ENCODE measurements at regions of chr6 and their contacts with region 1.

Region 1: DNA sequence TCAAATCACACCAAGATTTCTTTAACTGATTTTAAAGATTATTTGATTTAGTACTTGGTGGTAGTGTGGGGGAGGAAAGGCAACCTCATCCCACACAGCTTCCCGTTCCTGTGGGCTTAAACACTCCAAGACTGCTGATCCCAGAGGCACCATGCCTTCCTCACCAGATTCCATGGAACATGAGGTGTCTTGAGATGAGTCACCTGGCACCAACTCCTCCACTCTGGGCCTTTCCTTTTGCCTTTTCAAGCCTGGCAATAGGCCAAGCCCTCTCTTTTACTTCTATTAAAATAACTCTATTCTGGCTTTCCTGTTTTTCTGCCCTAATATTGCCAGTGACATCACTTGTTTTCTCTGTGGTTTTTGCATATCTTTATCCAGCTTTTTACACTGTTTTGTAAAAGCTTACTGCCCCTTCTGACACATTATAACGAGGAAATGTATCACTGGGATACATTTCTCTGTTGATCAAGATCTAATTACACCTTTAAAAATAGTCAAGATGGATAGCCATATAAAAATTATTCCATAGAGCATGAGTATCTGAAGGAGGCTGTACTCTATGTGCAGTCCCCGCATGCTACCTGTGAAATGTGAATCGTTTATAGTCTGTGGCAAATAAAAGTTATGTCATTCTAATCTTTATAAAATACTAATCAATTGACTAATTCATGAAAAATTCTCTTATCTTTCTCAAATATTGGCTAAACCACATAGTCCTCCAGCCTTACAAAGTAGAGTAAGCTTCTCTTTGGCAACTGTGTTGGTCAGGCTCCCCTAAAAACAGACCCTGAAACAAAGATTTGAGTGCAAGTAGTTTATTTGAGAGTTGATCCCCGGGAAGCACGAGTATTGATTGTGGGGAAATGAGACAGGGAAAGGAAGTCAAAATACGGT is 257.8 kb upstream of the KCNQ5 start:
- DNase-seq: no peak
- CTCF ChIP-seq: no peak

Region 2: DNA sequence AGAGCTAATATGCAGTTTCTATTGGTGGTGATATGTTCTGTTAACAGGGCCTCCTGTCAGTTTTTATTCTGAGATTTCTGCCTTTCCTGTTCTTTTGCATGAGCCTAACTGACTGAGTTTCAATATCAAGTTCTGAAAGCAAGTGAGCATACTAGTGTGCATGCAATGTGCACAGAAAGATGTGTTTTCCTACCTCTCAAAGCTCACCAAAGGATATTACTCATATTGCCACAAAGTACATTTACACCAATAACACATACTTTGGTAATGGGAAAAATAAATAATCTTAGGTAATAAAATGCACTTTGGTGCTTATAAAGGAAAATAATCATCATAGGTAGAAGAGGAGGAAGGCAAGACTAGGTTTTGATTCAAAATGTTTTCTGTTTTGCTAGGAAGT is 666.2 kb after region 1 on chr6:
- CTCF ChIA-PET with region 1: no interaction called
- POLR2A ChIA-PET with region 1: interaction called, 10 read pairs
- DNase-seq: peak; percentile 12
- CTCF ChIP-seq: no peak